B cell (primary cell): ENCODE measurements at regions of chr11 and their contacts with region 1.

Region 1: GRCh38 chr11:47552566-47553416 is at the start of gene CELF1:
- DNase-seq: peak; percentile 96
- ATAC-seq: peak; percentile 95
- H3K4me3 ChIP-seq: peak within 1 kb of the TSS; percentile 65 to 94 (median 90)
- H3K4me3 Mint-ChIP-seq: peak within 1 kb of the TSS; percentile 99
- H3K27ac ChIP-seq: peak within 1 kb of the TSS; percentile 72 to 88
- H3K27ac Mint-ChIP-seq: peak within 1 kb of the TSS; percentile 93
- H3K4me1 ChIP-seq: peaks cover 31 to 32% of the 10 kb centered on the region in 2 donors
- H3K4me1 Mint-ChIP-seq: peaks cover 44% of the 10 kb centered on the region
- H3K27me3 ChIP-seq: no peaks in the 10 kb centered on the region
- H3K27me3 Mint-ChIP-seq: no peaks in the 10 kb centered on the region
- CTCF ChIP-seq: peak; percentile 96
- total RNA-seq, gene CELF1: 153 and 167 TPM in 2 replicates

Region 2: DNA sequence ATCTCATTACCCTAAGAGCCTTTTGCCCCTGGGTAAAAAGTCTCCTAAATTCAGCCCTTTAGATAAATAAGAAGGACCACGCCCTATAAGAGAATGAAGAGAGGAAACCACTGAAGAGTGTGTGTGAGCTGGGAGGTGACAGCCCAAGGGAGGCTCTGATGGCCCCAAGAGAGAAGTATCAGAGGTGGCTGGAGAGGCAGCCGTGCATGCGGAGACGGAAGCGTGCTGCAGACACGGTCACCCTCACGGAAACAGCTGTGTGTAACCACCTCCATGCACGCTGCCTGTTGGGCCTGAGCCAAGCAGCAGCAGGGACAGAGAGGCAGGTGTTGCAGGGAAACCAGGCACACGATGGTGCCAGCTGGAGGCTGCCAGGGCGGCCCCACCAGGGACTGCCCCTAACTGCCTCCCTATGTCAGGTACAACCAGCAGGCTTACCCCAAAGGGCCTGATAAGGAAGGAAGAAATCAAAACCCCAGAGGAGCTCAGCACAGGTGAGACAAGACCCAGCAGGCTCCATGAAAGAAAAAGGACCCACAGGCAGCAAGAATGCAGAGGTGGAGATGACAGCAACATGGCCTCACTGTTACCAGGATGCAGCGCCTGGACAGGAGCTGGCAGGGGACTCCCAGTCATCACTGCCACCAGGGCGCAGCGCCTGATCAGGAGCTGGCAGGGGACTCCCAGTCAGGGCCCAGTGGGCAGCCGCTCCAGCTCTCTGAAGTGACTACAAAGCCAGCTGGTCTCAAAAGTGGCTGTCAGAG is 1622.6 kb before region 1 on chr11:
- CTCF ChIA-PET with region 1: no interaction called
- POLR2A ChIA-PET with region 1: no interaction called
- intact Hi-C with region 1: loop called (anchors 10 kb)
- DNase-seq: peak; percentile 94
- ATAC-seq: peak; percentile 77
- H3K4me3 ChIP-seq: peak overlapping the region; percentile 26 to 95 (median 79)
- H3K4me3 Mint-ChIP-seq: peak overlapping the region; percentile 95
- H3K27ac ChIP-seq: peak overlapping the region; percentile 92 to 93
- H3K27ac Mint-ChIP-seq: peak overlapping the region; percentile 92
- H3K4me1 ChIP-seq: peaks cover 65 to 84% of the 10 kb centered on the region in 2 donors
- H3K4me1 Mint-ChIP-seq: peaks cover 93% of the 10 kb centered on the region
- H3K27me3 ChIP-seq: no peaks in the 10 kb centered on the region
- H3K27me3 Mint-ChIP-seq: no peaks in the 10 kb centered on the region
- CTCF ChIP-seq: no peak

Region 3: DNA sequence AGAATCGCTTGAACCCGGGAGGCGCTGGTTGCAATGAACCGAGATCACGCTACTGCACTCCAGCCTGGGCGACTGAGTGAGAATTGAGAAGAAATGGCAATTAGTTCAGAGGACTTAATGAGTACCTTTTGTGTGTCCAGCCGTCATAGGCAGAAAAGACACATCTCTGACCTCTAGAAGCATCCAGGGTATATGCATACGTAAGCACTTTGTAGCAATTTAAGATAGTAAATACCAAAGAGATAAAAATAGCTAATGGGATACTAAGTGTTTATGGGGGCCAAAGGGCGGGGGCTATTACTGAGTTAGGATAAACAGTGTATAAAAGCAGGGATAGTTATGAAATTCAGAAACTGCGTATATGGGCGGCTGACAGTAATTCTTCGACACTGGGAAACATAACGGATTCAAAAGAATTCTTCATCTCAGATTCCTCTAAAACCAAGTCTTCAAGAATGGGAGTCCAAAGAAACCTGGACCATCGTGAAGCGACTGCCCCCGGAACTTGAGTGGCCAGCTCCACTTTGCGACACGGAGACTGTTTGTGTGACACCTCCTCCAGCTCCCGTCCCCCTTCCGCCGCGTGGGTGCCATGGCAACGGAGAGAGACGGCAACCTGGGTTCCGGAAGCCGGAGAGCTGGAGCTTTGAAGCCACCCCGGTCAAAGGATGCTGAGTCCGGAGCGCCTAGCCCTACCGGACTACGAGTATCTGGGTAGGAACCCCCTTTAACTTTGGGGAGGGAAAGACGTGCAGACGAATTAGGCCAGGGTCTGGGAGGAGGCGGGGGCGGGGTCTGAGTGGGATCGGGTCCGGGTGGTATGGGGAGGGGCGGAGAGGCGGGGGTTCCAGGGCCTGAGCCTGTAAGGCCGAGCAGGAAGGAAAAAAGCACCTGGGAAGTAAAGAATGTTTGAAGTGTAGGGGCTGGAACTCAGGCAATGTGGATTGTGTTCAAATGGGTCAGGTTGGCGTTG is 616.4 kb before region 1 on chr11 and contains the start of gene CSTPP1:
- CTCF ChIA-PET with region 1: no interaction called
- POLR2A ChIA-PET with region 1: no interaction called
- intact Hi-C with region 1: loop called (anchors 10 kb)
- DNase-seq: peak; percentile 93
- ATAC-seq: peak; percentile 90
- H3K4me3 ChIP-seq: peak within 1 kb of the TSS; percentile 38 to 67 (median 64)
- H3K4me3 Mint-ChIP-seq: peak within 1 kb of the TSS; percentile 90
- H3K27ac ChIP-seq: peak within 1 kb of the TSS; percentile 30 to 69
- H3K27ac Mint-ChIP-seq: peak within 1 kb of the TSS; percentile 85
- H3K4me1 ChIP-seq: peaks cover 5 to 12% of the 10 kb centered on the region in 2 donors
- H3K4me1 Mint-ChIP-seq: peaks cover 18% of the 10 kb centered on the region
- H3K27me3 ChIP-seq: peaks cover 0 to 5% (median 0%) of the 10 kb centered on the region in 4 experiments
- H3K27me3 Mint-ChIP-seq: peaks cover 13% of the 10 kb centered on the region
- CTCF ChIP-seq: no peak
- total RNA-seq, gene CSTPP1: 27.4 and 29.0 TPM in 2 replicates

Region 4: GRCh38 chr11:47399860-47400767 is 152.7 kb before region 1 on chr11:
- CTCF ChIA-PET with region 1: no interaction called
- POLR2A ChIA-PET with region 1: interaction called, 5 read pairs
- intact Hi-C with region 1: loop called (anchors 2 kb)
- DNase-seq: peak; percentile 71
- ATAC-seq: peak; percentile 82
- H3K4me3 ChIP-seq: peak overlapping the region; percentile 71 to 85 (median 81)
- H3K4me3 Mint-ChIP-seq: peak overlapping the region; percentile 91
- H3K27ac ChIP-seq: peak overlapping the region; percentile 85
- H3K27ac Mint-ChIP-seq: peak overlapping the region; percentile 96
- H3K4me1 ChIP-seq: peaks cover 45 to 53% of the 10 kb centered on the region in 2 donors
- H3K4me1 Mint-ChIP-seq: peaks cover 45% of the 10 kb centered on the region
- H3K27me3 ChIP-seq: no peaks in the 10 kb centered on the region
- H3K27me3 Mint-ChIP-seq: no peaks in the 10 kb centered on the region
- CTCF ChIP-seq: no peak

Region 5: GRCh38 chr11:47509077-47509536 is 43.7 kb before region 1 on chr11:
- CTCF ChIA-PET with region 1: interaction called, 3 read pairs
- POLR2A ChIA-PET with region 1: no interaction called
- intact Hi-C with region 1: loop called (anchors 2 kb)
- DNase-seq: no peak
- ATAC-seq: no peak
- H3K4me3 ChIP-seq: no peak overlapping the region
- H3K4me3 Mint-ChIP-seq: peak overlapping the region; percentile 52
- H3K27ac ChIP-seq: peak overlapping the region; percentile 46 to 91
- H3K27ac Mint-ChIP-seq: peak overlapping the region; percentile 81
- H3K4me1 ChIP-seq: peaks cover 56 to 68% of the 10 kb centered on the region in 2 donors
- H3K4me1 Mint-ChIP-seq: peaks cover 70% of the 10 kb centered on the region
- H3K27me3 ChIP-seq: no peaks in the 10 kb centered on the region
- H3K27me3 Mint-ChIP-seq: no peaks in the 10 kb centered on the region
- CTCF ChIP-seq: no peak

Region 6: GRCh38 chr11:47565340-47566148 is 12.8 kb after region 1 on chr11 and contains the start of gene PTPMT1:
- CTCF ChIA-PET with region 1: interaction called, 19 read pairs
- POLR2A ChIA-PET with region 1: interaction called, 7 read pairs
- intact Hi-C with region 1: loop called (anchors 1 kb)
- DNase-seq: peak; percentile 77
- ATAC-seq: peak; percentile 94
- H3K4me3 ChIP-seq: peak within 1 kb of the TSS; percentile 59 to 90 (median 83)
- H3K4me3 Mint-ChIP-seq: peak within 1 kb of the TSS; percentile 85
- H3K27ac ChIP-seq: peak within 1 kb of the TSS; percentile 81 to 89
- H3K27ac Mint-ChIP-seq: peak within 1 kb of the TSS; percentile 87
- H3K4me1 ChIP-seq: peaks cover 8 to 17% of the 10 kb centered on the region in 2 donors
- H3K4me1 Mint-ChIP-seq: peaks cover 20% of the 10 kb centered on the region
- H3K27me3 ChIP-seq: no peaks in the 10 kb centered on the region
- H3K27me3 Mint-ChIP-seq: no peaks in the 10 kb centered on the region
- CTCF ChIP-seq: no peak
- total RNA-seq, gene PTPMT1: 20.8 and 26.2 TPM in 2 replicates

Region 7: DNA sequence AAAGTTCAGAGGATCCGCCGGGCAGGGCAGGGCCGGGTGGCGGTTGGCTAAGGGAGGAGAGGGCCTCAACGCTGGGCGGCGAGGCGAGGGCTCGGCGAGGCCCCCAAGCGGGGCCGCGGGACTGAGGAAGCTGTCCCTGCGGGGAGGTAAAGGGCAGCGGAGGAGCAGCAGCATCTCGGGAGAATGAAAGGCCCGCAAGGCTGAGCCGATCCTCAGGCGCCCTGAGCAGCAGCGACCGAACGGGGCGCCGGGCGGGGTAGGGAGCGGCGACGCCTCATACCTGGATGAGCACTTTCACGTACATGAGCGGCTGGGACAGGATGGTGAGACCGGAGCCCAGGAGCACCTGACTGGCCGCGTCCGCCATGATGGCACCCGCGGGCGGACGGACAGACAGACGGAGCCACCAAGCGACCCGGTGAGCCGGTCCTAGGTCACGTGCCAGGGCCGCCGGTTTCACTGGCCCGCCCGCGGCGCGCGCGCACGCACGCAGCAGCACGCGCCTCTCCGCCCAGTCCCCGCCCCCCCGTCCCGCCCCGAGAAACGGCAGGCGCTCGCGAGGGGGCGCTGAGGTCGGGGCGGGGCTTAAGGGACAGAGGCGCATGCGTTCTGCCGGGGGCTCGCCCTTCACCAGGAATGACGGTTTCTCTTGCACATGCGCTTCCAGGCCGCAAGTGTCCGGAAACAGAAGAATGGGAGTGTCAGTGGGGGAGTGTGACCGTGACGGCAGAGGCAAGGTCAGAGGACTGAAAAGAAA is 89.5 kb after region 1 on chr11 and contains the start of gene MTCH2:
- CTCF ChIA-PET with region 1: no interaction called
- POLR2A ChIA-PET with region 1: interaction called, 4 read pairs
- intact Hi-C with region 1: loop called (anchors 1 kb)
- DNase-seq: peak; percentile 99
- ATAC-seq: peak; percentile 94
- H3K4me3 ChIP-seq: peak within 1 kb of the TSS; percentile 79 to 86 (median 79)
- H3K4me3 Mint-ChIP-seq: peak within 1 kb of the TSS; percentile 93
- H3K27ac ChIP-seq: peak within 1 kb of the TSS; percentile 92
- H3K27ac Mint-ChIP-seq: peak within 1 kb of the TSS; percentile 96
- H3K4me1 ChIP-seq: peaks cover 13 to 21% of the 10 kb centered on the region in 2 donors
- H3K4me1 Mint-ChIP-seq: peaks cover 23% of the 10 kb centered on the region
- H3K27me3 ChIP-seq: no peaks in the 10 kb centered on the region
- H3K27me3 Mint-ChIP-seq: no peaks in the 10 kb centered on the region
- CTCF ChIP-seq: peak; percentile 29
- total RNA-seq, gene MTCH2: 26.9 and 30.9 TPM in 2 replicates